ENCODE measurements at regions of chr20 and their contacts with region 1.

Region 1: GRCh38 chr20:49541733-49542513 is 26.0 kb downstream of the PTGIS start:
- DNase-seq: peak; percentile 66

Region 2: GRCh38 chr20:49513517-49513916 is 28.4 kb before region 1 on chr20:
- CTCF ChIA-PET with region 1: no interaction called
- POLR2A ChIA-PET with region 1: no interaction called
- DNase-seq: no peak

Region 3: GRCh38 chr20:49529470-49529869 is 12.5 kb before region 1 on chr20:
- CTCF ChIA-PET with region 1: no interaction called
- POLR2A ChIA-PET with region 1: no interaction called
- DNase-seq: no peak

Region 4: DNA sequence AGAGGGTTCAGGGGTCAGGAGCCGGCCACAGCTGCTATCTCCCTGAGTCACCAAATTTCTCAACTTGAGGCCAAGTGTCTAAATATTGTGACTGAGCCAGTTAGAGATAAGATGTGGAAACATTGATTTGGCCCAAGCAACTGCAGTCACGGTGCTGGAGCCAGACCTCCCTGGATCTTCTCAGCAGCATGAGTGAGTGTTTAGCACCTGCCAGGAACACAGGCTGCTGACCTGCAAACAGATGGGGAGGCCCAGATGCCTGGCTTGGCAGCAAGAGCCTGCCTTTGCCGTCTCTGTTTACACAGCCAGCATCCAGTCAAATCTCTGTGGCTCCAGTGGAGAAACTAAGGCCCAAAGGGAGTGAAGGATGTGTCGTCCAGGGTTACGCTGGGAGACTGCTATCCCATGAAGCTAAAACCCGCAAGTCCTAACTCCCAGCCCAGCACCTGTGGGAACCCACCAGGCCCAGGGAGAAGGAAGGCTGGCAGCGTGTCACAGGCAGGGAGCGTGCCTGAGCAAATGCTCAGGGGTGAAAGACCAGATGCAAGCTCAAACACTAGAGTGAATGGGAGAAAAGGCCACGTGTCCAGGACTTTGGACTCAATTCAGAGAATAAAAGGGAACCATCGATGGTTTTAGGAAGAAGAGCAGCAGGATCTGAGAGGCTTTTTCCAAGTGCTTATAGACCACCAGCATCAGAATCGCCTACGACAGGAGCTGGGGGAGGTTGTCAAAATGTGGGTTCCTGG is 41.9 kb after region 1 on chr20:
- CTCF ChIA-PET with region 1: no interaction called
- POLR2A ChIA-PET with region 1: no interaction called
- DNase-seq: no peak

Region 5: GRCh38 chr20:49608743-49609670 is 67.1 kb after region 1 on chr20:
- CTCF ChIA-PET with region 1: interaction called, 21 read pairs
- POLR2A ChIA-PET with region 1: interaction called, 4 read pairs
- DNase-seq: peak; percentile 78

Region 6: DNA sequence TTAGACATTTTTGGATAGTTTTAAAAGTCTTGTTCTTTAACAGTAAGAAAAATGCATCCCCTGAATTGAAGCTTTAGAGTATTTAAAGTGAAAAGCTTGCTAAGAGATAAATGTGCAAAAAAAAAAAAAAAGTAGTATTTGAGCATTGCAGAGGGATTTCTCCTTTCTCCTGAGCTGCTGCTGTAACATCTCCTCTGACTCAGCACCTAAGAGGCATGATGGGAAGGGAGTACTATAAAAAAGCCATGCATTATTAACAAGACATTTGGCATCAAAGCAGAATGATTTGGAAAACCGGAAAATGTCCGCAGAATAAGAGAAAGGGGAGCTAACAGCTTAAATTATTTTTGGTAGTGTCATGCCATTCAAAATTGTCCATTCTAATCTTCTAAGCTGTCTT is 143.9 kb after region 1 on chr20:
- CTCF ChIA-PET with region 1: no interaction called
- POLR2A ChIA-PET with region 1: no interaction called
- DNase-seq: no peak